ENCODE measurements at regions of chr2 and their contacts with region 1.

Region 1: DNA sequence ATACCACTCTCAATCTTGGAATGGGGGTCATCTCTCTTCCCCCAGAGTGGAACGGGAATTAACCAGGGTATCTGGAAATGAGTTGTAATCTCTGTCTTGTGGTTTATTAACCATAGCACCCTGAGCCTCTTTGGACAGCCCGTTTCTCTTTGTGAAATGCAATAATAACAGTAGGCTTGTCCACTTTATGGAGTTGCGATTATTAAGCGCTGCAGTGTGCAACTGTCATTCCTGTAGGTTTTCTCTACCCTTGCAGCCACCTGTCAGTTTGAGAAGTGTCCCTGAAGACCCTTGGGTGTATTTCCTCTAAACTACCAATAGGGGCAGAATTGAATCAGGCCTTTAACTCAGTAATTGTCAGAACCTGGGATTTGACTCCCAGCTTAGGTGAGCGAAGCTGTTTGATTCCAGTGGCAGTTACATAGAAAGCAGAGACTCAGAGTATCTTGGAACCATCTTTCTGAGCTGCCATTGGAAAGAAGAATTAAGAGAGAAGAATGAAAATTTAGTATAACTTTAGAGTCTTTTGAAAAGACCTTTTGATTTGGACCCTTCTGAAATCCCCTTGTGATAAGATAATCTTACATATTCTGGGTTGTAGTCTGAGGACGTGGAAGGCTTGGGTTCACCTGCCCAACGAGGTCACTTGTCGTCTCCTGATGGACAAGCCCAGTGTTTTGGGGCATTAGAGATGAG is 2.5 kb downstream of the HK2 start:
- DNase-seq: no peak
- H3K4me3 ChIP-seq: peak overlapping the region; percentile 59 to 69
- H3K27ac ChIP-seq: peak overlapping the region; percentile 42 to 84
- H3K4me1 ChIP-seq: peaks cover 0 to 29% (median 13%) of the 10 kb centered on the region in 4 donors
- H3K27me3 ChIP-seq: no peaks in the 10 kb centered on the region
- CTCF ChIP-seq: peak; percentile 56 to 57

Region 2: GRCh38 chr2:74715078-74715791 is 121.2 kb before region 1 on chr2:
- intact Hi-C with region 1: loop called (anchors 2 kb)
- DNase-seq: peak; percentile 81 to 86
- H3K4me3 ChIP-seq: peak overlapping the region; percentile 52 to 76
- H3K27ac ChIP-seq: peak overlapping the region; percentile 70 to 75
- H3K4me1 ChIP-seq: peaks cover 0 to 10% (median 7%) of the 10 kb centered on the region in 4 donors
- H3K27me3 ChIP-seq: no peaks in the 10 kb centered on the region
- CTCF ChIP-seq: peak; percentile 77 to 82

Measured in tibial artery (tissue), 4 donors.